ENCODE measurements at regions of chr4 and their contacts with region 1.

Region 1: DNA sequence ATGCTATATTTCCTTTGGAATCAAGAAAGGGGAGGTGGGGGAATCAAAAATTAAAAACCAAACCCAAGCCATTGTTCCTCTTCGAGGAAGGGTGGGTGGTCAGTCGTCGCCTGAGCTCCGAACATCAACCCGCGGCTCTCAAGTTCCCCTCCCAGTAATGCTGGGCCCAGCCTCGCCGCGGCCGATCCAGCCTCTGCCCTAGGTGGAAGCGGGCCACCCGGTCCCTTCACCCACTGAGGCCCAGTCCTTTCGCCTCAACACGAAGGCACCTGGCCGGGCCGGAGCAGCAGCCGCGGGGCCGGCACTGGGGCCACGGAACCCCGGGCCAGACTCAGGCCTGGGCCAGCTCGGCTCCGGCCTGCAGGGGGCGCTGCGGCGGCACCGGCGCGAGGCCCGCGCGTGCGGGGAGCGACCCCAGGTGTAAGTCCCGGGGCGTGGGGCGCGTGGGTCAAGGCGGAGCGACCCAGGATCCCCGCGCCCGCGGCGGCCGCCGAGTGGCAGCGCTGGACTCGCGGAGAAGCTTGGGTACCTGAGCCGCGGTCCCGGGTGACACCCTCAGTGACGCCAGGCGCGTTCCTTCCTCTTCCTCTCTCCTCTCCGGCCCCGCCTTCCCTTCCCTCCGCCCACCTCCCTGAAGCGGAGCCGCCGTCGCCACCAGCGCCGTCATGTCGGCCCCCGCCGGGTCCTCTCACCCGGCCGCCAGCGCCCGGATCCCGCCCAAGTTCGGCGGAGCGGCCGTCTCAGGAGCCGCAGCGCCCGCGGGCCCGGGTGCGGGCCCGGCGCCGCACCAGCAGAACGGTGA is at the start of gene SEC24B:
- DNase-seq: peak; percentile 94 to 95 (median 94)
- ATAC-seq: peak; percentile 94 to 98 (median 96)
- H3K4me3 ChIP-seq: peak within 1 kb of the TSS; percentile 72 to 98 (median 84)
- H3K27ac ChIP-seq: peak within 1 kb of the TSS; percentile 82 to 95 (median 93)
- H3K4me1 ChIP-seq: peaks cover 11 to 46% (median 34%) of the 10 kb centered on the region in 12 donors
- H3K27me3 ChIP-seq: no peaks in the 10 kb centered on the region
- CTCF ChIP-seq: peak; percentile 45 to 99 (median 92)
- POLR2A ChIP-seq: peak in 1 of 2 donors; percentile 89
- total RNA-seq, gene SEC24B: 20.7 to 34.8 (median 30.5) TPM

Region 2: DNA sequence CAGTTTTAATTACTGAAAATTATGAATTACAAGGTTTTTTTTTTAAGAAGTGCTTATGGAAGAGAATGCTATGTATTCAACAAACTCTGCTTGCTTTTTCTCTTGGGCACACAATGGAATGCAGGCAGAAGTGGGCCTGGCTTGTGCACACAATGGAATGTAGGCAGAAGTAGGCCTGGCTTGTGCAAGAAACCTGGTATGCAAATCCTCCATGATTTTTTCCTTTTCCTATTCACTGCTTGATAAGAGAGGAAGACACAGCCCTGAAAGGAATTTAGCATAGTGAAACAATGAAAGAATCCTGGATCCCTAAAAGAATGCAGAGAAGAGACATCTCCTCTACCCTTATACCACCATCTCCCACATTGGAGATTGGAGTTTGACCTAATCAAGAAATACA is 269.4 kb before region 1 on chr4:
- intact Hi-C with region 1: no loop called
- DNase-seq: no peak
- ATAC-seq: no peak
- H3K4me3 ChIP-seq: no peak overlapping the region
- H3K27ac ChIP-seq: no peak overlapping the region
- H3K4me1 ChIP-seq: no peaks in the 10 kb centered on the region
- H3K27me3 ChIP-seq: no peaks in the 10 kb centered on the region
- CTCF ChIP-seq: no peak
- POLR2A ChIP-seq: no peak

Region 3: DNA sequence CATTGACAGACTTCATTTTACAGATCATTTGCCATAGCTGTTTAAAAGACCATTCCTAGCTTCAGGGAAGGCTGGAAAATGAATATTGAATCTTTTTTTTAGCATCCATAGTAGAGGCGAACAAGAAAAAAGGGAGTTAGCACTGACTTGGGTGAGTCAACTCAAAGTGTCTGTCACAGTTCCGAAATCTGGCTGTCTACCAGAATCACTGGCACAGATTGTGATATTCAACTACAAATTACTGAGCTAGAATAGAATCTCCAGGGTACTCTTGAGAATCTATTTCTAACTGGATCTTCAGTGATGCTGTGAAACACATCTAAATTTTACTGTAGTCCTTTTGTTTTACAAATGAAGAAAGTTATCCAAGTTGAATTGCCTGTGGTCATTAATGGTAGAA is 31.7 kb after region 1 on chr4:
- intact Hi-C with region 1: loop called in 1 of 10 experiments (anchors 5 kb)
- DNase-seq: peak in 1 of 5 donors; percentile 18
- ATAC-seq: peak in 3 of 4 donors; percentile 65 to 88 (median 82)
- H3K4me3 ChIP-seq: no peak overlapping the region
- H3K27ac ChIP-seq: no peak overlapping the region
- H3K4me1 ChIP-seq: peaks cover 0 to 50% (median 22%) of the 10 kb centered on the region in 12 donors
- H3K27me3 ChIP-seq: no peaks in the 10 kb centered on the region
- CTCF ChIP-seq: no peak
- POLR2A ChIP-seq: no peak

Region 4: GRCh38 chr4:109506890-109507289 is 73.5 kb after region 1 on chr4:
- intact Hi-C with region 1: loop called in 1 of 10 experiments (anchors 5 kb)
- DNase-seq: no peak
- ATAC-seq: no peak
- H3K4me3 ChIP-seq: no peak overlapping the region
- H3K27ac ChIP-seq: no peak overlapping the region
- H3K4me1 ChIP-seq: peaks cover 0 to 6% (median 0%) of the 10 kb centered on the region in 12 donors
- H3K27me3 ChIP-seq: no peaks in the 10 kb centered on the region
- CTCF ChIP-seq: no peak
- POLR2A ChIP-seq: no peak

Region 5: GRCh38 chr4:109658871-109659410 is 225.5 kb after region 1 on chr4:
- intact Hi-C with region 1: loop called in 5 of 10 experiments (anchors 5 to 10 kb)
- DNase-seq: no peak
- ATAC-seq: no peak
- H3K4me3 ChIP-seq: no peak overlapping the region
- H3K27ac ChIP-seq: no peak overlapping the region
- H3K4me1 ChIP-seq: no peaks in the 10 kb centered on the region
- H3K27me3 ChIP-seq: no peaks in the 10 kb centered on the region
- CTCF ChIP-seq: peak in 6 of 12 donors; percentile 13 to 41 (median 29)
- POLR2A ChIP-seq: no peak

Region 6: GRCh38 chr4:109702950-109703663 is 269.7 kb after region 1 on chr4 and contains the start of gene CASP6:
- intact Hi-C with region 1: loop called in 4 of 10 experiments (anchors 2 to 10 kb)
- DNase-seq: peak; percentile 87 to 93 (median 87)
- ATAC-seq: peak; percentile 85 to 97 (median 96)
- H3K4me3 ChIP-seq: peak within 1 kb of the TSS; percentile 59 to 97 (median 76)
- H3K27ac ChIP-seq: peak within 1 kb of the TSS; percentile 40 to 90 (median 85)
- H3K4me1 ChIP-seq: peaks cover 0 to 21% (median 16%) of the 10 kb centered on the region in 12 donors
- H3K27me3 ChIP-seq: no peaks in the 10 kb centered on the region
- CTCF ChIP-seq: peak; percentile 53 to 82 (median 68)
- POLR2A ChIP-seq: peak in 1 of 2 donors; percentile 54
- total RNA-seq, gene CASP6: 3.5 to 16.4 (median 6.5) TPM

Region 7: DNA sequence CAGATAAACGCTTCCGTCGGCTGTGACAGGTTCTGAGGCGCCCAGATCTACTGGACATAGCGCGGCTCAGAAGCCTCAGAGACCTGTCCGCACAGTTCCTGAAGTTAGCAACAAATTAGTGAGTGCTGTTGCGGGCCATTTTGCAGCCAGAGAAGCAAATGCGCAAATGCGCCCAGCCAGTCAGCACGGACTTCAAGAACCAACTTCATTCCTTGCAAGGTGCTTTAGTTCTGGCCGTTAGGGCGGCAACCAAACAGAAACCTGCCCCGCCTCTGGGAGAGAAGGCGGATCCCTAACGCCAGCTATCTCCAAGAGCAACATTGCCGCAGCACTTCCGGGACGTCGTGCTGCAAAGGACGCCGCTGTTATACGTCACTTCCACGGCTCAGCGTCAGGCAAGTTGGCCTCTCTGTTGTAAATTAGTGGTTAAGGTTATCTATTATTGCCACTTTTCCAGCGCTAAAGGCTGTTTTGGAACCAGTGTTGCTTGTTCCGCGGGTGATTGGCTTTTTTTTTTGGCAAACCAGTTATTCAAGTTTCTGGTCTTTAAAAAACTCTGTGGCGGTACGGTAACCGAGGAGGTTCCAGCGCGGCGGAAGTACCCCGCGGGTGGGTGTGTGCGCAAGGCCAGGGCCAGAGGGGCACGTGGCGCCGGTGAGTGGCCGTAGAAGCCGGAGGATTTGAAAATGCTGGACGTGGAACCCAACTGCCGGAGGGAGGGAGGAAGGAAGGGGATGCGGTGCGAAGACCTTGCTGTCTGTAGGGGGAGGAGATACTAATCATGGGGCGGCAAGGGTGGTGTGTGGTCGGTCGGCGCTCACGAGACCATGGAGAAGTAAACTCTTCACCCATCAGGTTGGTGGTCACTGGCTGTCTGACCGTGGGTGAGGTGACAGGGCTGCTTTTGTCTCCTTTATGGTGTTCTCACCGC is 382.0 kb after region 1 on chr4 and contains the start of gene GAR1:
- intact Hi-C with region 1: loop called in 6 of 10 experiments (anchors 2 to 5 kb)
- DNase-seq: peak; percentile 87 to 93 (median 90)
- ATAC-seq: peak; percentile 99 to 100 (median 100)
- H3K4me3 ChIP-seq: peak within 1 kb of the TSS; percentile 71 to 92 (median 80)
- H3K27ac ChIP-seq: peak within 1 kb of the TSS; percentile 39 to 93 (median 84)
- H3K4me1 ChIP-seq: peaks cover 0 to 21% (median 13%) of the 10 kb centered on the region in 12 donors
- H3K27me3 ChIP-seq: no peaks in the 10 kb centered on the region
- CTCF ChIP-seq: peak in 1 of 12 donors; percentile 16
- POLR2A ChIP-seq: peak in 1 of 2 donors; percentile 48
- total RNA-seq, gene GAR1: 3.2 to 10.9 (median 8.5) TPM

Measured in heart left ventricle (tissue), 16 donors.